A549 (cell line): ENCODE measurements at regions of chr7 and their contacts with region 1.

Region 1: DNA sequence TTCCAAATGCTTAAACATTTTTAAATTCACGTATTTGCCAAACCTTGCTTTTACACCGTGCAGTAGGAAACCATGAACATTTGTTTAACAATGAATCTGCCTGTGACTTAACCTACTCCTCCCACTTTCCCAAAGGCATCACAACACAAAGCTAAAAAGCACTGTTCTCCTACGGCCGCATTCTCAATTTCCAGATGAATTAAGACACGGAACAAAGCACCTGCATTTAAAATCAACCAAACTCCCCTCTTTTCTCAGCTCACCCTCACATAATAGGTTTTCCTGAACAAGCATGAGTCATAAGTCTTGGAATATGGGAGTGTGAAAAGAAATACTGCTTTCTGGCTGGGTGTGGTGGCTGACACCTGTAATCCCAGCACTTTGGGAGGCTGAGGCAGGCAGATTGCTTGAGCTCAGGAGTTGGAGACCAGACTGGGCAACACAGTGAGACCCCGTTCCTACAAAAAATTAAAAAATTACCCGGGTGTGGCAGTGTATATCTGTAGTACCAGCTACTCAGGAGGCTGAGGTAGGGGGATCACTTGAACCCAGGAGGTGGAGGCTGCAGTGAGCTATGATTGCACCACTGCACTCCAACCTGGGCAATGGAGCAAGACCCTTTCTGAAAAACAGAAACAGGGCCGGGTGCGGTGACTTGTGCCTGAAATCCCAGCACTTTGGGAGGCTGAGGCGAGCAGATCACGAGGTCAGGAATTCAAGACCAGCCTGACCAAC is 51.7 kb upstream of the CYTH3 start:
- DNase-seq: no peak
- ATAC-seq: no peak
- H3K4me3 ChIP-seq: no peak overlapping the region
- H3K27ac ChIP-seq: no peak overlapping the region
- H3K4me1 ChIP-seq: peaks cover 5% of the 10 kb centered on the region; the same call in 2 of the 3 replicates
- CTCF ChIP-seq: no peak
- EP300 ChIP-seq: no peak
- POLR2A ChIP-seq: no peak
- RAD21 ChIP-seq: no peak

Region 2: DNA sequence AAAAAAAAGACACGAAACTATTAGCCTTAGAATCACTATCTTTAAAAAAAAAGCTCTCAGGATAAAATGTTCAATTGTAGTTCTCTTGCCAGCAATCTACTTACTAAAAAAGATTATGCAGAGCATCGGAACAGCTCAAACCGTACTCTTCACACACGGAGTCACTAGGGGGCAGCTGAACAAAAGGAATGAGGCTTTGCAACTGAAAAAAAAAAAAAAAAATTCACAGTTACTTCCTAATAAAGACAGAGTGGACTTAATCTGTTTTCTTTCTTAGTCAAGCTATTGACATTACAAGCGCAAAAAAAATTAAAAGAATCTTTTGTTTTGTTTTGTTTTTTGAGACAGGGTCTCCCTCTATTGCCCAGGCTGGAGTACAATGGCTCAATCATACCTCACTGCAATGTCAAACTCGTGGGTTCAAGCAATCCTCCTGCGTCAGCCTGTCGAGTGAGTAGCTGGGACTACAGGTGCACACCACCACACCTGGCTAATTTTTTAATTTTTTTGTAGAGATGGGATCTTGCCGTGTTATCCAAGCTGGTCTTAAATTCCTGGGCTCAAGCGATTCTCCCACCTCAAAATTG is 326.8 kb before region 1 on chr7:
- CTCF ChIA-PET with region 1: interaction called, 20 read pairs
- POLR2A ChIA-PET with region 1: no interaction called
- DNase-seq: peak; percentile 63 to 73
- ATAC-seq: peak; percentile 83 to 89
- H3K4me3 ChIP-seq: no peak overlapping the region
- H3K27ac ChIP-seq: no peak overlapping the region
- H3K4me1 ChIP-seq: peaks cover 13% of the 10 kb centered on the region
- CTCF ChIP-seq: peak; percentile 75
- EP300 ChIP-seq: no peak
- POLR2A ChIP-seq: no peak
- RAD21 ChIP-seq: peak; percentile 85 to 89

Region 3: DNA sequence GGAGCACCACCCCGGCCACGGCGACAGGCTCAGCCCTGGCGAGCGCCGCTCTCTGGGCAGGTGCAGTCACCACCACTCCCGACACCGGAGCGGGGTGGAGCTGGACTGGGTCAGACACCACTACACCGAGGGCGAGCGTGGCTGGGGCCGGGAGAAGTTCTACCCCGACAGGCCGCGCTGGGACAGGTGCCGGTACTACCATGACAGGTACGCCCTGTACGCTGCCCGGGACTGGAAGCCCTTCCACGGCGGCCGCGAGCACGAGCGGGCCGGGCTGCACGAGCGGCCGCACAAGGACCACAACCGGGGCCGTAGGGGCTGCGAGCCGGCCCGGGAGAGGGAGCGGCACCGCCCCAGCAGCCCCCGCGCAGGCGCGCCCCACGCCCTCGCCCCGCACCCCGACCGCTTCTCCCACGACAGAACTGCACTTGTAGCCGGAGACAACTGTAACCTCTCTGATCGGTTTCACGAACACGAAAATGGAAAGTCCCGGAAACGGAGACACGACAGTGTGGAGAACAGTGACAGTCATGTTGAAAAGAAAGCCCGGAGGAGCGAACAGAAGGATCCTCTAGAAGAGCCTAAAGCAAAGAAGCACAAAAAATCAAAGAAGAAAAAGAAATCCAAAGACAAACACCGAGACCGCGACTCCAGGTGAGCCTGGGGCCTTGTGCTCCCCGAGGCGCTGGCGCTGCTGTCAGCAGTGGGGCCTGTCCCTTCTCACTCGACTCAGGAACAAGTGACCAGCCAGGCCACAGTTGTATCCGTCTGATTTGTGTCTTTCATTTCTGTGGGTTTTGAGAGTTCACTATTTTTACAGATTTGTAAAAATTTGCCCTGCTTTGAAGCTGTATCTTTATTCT is 169.4 kb before region 1 on chr7:
- CTCF ChIA-PET with region 1: interaction called, 102 read pairs
- POLR2A ChIA-PET with region 1: no interaction called
- DNase-seq: no peak
- ATAC-seq: no peak
- H3K4me3 ChIP-seq: no peak overlapping the region
- H3K27ac ChIP-seq: no peak overlapping the region
- H3K4me1 ChIP-seq: no peaks in the 10 kb centered on the region
- CTCF ChIP-seq: no peak
- EP300 ChIP-seq: no peak
- POLR2A ChIP-seq: no peak
- RAD21 ChIP-seq: no peak

Region 4: DNA sequence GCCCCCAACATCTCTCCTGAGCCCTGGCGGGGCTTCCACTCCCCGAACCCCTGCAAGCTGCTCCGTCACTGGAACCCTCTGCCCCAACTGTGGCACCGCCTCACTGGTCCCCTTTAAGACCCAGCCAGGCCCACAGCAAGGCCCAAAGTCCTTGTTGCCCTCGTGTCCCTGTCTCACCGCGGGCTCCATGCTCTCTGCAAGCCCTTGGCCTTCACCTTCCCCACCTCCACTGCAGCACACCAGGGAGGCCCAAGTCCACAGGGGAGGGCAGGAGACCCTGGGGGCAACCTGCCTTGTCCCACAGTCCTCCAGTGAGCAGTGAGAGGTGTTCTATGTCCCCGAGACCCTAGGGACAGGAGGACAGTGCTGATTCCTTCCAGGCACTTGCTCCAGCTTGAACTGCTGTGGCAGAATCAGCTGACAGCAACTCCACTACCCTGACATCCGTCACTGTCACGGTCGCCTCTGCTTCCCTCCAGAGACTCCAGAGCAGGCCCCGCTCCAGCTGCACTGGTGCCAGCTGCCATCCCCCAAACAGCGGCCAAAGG is 157.1 kb before region 1 on chr7:
- CTCF ChIA-PET with region 1: interaction called, 102 read pairs
- POLR2A ChIA-PET with region 1: no interaction called
- DNase-seq: no peak
- ATAC-seq: no peak
- H3K4me3 ChIP-seq: no peak overlapping the region
- H3K27ac ChIP-seq: no peak overlapping the region
- H3K4me1 ChIP-seq: no peaks in the 10 kb centered on the region
- CTCF ChIP-seq: no peak
- EP300 ChIP-seq: no peak
- POLR2A ChIP-seq: no peak
- RAD21 ChIP-seq: no peak

Region 5: GRCh38 chr7:6248581-6248980 is 75.6 kb before region 1 on chr7:
- CTCF ChIA-PET with region 1: interaction called, 11 read pairs
- POLR2A ChIA-PET with region 1: no interaction called
- DNase-seq: no peak
- ATAC-seq: peak; percentile 85 to 86
- H3K4me3 ChIP-seq: no peak overlapping the region
- H3K27ac ChIP-seq: peak overlapping the region; percentile 27 to 56; a peak in 4 of 6 replicates
- H3K4me1 ChIP-seq: peaks cover 29% of the 10 kb centered on the region
- CTCF ChIP-seq: no peak
- EP300 ChIP-seq: no peak
- POLR2A ChIP-seq: no peak
- RAD21 ChIP-seq: no peak

Region 6: DNA sequence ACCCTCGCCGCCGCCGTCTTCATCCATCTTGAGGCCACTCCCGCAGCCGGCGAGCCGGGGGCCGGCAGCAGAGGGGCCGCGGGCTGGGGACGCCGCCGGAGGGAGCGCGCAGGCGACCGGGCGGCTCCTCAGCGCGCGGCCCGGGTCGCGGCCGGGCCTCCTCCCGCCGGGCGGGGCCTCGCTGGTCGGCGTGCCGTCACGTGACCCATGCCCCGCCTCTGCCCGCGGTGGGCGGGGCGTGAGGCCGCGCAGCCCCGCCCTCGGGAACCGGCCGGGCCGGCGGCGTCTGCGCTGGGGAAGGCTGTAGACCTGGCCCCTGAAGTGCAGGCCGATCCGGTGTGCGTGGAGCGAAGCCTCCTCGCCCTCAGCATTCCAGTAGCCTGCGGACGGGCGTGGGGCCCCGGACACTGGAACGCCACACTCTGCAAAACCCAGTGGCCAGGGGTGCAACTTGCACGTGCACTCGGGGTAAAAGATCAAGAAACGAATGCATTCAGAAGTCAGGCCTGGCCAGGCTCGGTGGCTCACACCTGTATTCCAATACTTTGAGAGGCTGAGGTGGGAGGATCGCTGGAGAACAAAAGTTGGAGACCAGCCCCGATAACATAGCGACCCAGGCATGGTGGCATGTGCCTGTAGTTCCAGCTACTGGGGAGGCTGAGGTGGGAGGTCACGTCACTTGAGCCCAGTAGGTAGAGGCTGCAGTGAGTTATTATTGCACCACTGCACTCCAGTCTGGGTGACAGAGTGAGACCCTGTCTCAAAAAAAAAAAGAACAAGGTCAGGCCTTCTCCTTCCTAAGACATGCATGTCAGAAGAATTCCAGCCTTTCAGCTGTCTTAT is 51.4 kb before region 1 on chr7 and contains the start of gene CYTH3:
- CTCF ChIA-PET with region 1: interaction called, 35 read pairs
- POLR2A ChIA-PET with region 1: no interaction called
- DNase-seq: peak; percentile 76 to 86
- ATAC-seq: peak; percentile 76 to 83
- H3K4me3 ChIP-seq: peak within 1 kb of the TSS; percentile 90
- H3K27ac ChIP-seq: peak within 1 kb of the TSS; percentile 82 to 97
- H3K4me1 ChIP-seq: peaks cover 38% of the 10 kb centered on the region
- CTCF ChIP-seq: no peak
- EP300 ChIP-seq: no peak
- POLR2A ChIP-seq: peak; percentile 89
- RAD21 ChIP-seq: no peak; a peak in 1 of 5 replicates
- polyA plus RNA-seq, gene CYTH3: 15.5 and 18.6 TPM in 2 replicates

Region 7: DNA sequence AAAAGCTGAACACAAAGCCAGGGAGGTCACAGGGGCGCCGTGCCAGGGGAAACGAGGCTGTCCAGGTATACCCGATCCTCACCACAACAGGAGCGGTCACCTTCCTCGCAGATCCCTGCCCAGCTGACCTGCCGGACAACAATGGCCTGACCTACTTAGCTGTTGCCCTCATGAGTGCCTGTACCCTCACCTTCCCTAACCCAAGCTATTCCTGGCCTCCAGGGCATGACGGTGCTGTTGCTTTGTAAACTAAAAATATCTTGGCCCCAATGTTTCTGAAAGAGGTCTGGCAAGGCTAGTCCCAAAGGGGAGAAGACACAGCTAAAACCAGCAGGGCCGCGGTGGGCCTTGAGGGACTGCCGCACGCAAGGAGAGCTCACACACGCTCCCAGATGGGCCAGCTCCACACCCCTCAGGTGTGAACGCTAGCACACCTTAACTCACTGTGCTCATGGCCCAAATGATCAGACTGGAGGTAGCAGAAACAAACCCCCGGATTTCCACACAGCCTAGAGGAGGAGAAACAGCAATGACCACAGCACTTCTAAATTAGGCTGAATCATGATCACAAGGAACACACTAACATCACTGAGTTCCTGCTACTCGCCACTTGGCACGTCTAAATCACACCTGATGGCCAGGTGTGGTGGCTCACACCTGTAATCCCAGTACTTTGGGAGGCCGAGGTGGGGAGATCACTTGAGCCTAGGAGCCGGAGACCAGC is 14.6 kb after region 1 on chr7:
- CTCF ChIA-PET with region 1: interaction called, 31 read pairs
- POLR2A ChIA-PET with region 1: no interaction called
- DNase-seq: no peak
- ATAC-seq: no peak; a peak in 1 of 6 replicates
- H3K4me3 ChIP-seq: no peak overlapping the region
- H3K27ac ChIP-seq: no peak overlapping the region
- H3K4me1 ChIP-seq: no peaks in the 10 kb centered on the region
- CTCF ChIP-seq: no peak
- EP300 ChIP-seq: no peak
- POLR2A ChIP-seq: no peak
- RAD21 ChIP-seq: no peak